ENCODE measurements at regions of chr1 and their contacts with region 1.

Region 1: DNA sequence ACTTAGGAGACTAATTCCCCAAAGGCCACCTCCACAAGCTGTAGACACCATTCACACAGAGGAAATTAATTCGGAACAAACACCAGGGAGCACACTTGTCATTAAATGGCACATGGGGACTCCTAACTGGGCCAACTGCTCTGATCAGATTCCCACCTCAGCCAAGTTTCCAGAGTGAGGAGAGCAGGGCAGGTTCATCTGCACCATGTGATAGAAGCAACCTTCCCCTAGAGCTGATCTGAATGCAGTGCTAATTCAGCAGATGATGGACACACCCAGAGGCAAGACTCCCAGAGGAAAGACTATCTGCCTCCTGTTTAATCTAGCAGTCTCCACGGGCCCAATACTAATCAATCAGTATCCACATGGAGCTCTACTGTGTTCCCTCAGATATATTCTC is 147.0 kb downstream of the VAV3 start:
- DNase-seq: no peak
- ATAC-seq: no peak

Region 2: GRCh38 chr1:107683191-107683657 is 134.7 kb before region 1 on chr1:
- intact Hi-C with region 1: no loop called
- DNase-seq: no peak
- ATAC-seq: no peak

Region 3: GRCh38 chr1:107862064-107862463 is 44.1 kb after region 1 on chr1:
- intact Hi-C with region 1: loop called (anchors 10 kb)
- DNase-seq: peak; percentile 35
- ATAC-seq: no peak